ENCODE measurements at regions of chr1 and their contacts with region 1.

Region 1: GRCh38 chr1:153990468-153991150 is at the start of gene RPS27:
- DNase-seq: peak; percentile 82 to 98 (median 89)
- ATAC-seq: peak; percentile 84
- H3K4me3 ChIP-seq: peak within 1 kb of the TSS; percentile 81
- H3K27ac ChIP-seq: peak within 1 kb of the TSS; percentile 98
- H3K4me1 ChIP-seq: peaks cover 6 to 11% of the 10 kb centered on the region in 2 experiments; a peak in 3 of 5 replicates
- H3K27me3 ChIP-seq: no peaks in the 10 kb centered on the region
- CTCF ChIP-seq: peak in 1 of 3 experiments; percentile 26; a peak in 1 of 6 replicates
- EP300 ChIP-seq: peak; percentile 53; the same call in 1 of the 2 replicates
- POLR2A ChIP-seq: peak; percentile 100
- RAD21 ChIP-seq: peak; percentile 25 to 26; a peak in 1 of 4 replicates
- polyA plus RNA-seq, gene RPS27: 6,302 to 8,843 TPM

Region 2: DNA sequence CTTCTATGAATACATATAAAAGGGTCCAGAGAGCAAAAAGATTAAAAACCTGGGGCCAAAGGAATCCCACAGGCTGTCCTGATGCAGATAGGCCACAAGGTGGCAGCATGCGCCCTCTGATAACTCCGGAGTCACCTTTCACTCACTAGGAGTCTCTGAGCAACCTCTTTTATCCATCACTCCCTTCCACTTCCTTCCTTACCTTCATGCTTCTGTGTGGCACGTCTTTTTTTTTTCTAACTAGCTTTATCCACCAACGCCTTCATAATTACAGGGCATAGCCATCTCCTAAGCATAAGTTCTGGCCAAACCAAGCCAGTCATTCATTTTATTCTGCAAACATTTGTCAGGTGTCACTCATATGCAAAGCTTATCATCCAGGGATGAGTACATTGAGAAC is 638.1 kb before region 1 on chr1:
- CTCF ChIA-PET with region 1: interaction called, 3 read pairs
- POLR2A ChIA-PET with region 1: no interaction called
- in situ Hi-C with region 1: no loop called
- intact Hi-C with region 1: loop called (anchors 10 kb)
- DNase-seq: peak; percentile 79 to 82 (median 80)
- ATAC-seq: peak; percentile 85
- H3K4me3 ChIP-seq: no peak overlapping the region
- H3K27ac ChIP-seq: no peak overlapping the region
- H3K4me1 ChIP-seq: peaks cover 0 to 3% of the 10 kb centered on the region in 2 experiments; a peak in 1 of 5 replicates
- H3K27me3 ChIP-seq: peaks cover 7 to 31% of the 10 kb centered on the region in 2 experiments; a peak in 4 of 5 replicates
- CTCF ChIP-seq: peak; percentile 87 to 97 (median 91)
- EP300 ChIP-seq: no peak
- POLR2A ChIP-seq: no peak
- RAD21 ChIP-seq: peak; percentile 78 to 86

Region 3: DNA sequence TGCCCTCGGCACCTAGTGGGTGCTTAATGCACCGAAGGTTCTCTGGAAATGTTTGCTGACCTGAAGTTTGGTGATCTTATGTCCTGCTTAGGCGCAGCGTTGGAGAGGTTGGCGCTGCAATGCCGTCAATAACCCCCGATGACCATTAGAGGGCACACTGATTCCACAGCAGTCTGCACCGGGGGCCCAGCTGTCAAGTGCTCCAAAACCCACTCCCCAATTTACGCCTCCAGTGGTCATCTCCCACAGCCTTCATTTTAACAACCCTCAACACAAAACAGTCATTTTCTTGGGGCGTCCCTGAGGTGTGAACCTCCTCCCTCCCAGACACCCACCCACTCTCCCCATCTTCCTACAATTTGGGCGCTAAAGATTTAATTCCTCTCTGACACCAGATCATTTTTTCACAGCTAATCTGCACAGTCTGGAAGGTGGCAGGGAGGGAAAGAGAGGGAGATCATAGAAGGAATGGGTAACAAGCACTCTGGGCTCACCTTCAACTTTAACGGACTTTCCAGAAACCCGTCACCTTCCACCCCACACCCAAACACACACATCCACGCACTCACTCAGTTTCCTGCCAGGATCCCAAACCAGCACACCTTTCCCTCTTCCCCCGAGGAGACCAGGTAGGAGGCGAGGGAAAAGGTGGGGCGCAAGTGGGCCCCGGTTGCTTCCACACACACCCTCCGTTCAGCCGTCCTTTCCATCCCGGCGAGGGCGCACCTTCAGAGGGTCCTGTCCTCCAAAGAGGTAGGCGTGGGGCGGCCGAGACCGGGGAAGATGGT is 312.7 kb before region 1 on chr1:
- CTCF ChIA-PET with region 1: interaction called, 4 read pairs
- POLR2A ChIA-PET with region 1: interaction called, 10 read pairs
- in situ Hi-C with region 1: loop called (anchors 5 kb)
- intact Hi-C with region 1: loop called (anchors 5 kb)
- DNase-seq: peak; percentile 54 to 72 (median 62)
- ATAC-seq: peak; percentile 85
- H3K4me3 ChIP-seq: no peak overlapping the region
- H3K27ac ChIP-seq: no peak overlapping the region
- H3K4me1 ChIP-seq: peaks cover 0 to 19% of the 10 kb centered on the region in 2 experiments; a peak in 3 of 5 replicates
- H3K27me3 ChIP-seq: peaks cover 33 to 45% of the 10 kb centered on the region in 2 experiments; a peak in 4 of 5 replicates
- CTCF ChIP-seq: peak; percentile 91 to 95 (median 93)
- EP300 ChIP-seq: no peak
- POLR2A ChIP-seq: no peak
- RAD21 ChIP-seq: peak; percentile 86 to 94

Region 4: DNA sequence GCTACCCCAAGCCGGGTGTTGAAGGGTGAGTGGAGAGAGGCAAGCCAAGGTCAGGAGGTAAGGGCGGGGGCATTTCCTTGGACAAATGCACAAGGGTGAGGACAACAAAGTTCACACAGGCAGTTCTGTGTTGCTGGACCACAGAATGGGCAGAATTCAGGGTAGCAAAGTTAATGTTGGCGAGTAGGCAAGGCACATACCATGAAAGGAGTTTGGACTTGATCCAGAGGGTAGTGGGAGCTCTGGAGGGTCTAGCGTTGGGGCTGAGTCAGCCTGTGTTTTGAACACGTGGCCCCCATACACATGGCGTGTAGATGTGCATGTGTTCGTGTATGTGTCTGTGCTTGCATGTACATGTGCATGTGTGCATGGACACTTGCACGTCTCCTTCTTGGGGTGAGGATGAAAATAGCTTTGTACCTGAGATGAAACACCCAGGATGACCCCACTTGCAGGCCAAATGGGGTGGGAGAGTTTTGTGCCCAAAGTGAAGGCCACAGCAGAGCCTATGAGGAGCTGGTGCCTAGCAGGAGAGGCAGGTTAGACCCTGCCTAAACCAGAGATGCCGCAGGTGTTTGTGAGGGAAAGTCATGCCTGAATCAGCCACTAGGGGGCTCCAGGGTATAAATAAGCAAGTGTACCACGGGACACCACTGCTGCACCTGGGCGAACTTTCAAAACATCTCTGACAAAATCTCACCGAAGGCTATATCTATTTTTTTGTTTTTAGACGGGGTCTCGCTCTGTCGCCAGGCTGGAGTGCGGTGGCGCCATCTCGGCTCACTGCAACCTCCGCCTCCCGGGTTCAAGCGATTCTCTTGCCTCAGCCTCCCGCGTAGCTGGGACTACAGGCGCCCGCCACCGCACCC is 193.6 kb before region 1 on chr1:
- CTCF ChIA-PET with region 1: interaction called, 8 read pairs
- POLR2A ChIA-PET with region 1: interaction called, 13 read pairs
- in situ Hi-C with region 1: loop called (anchors 5 kb)
- intact Hi-C with region 1: loop called (anchors 1 kb)
- DNase-seq: peak; percentile 83 to 87 (median 86)
- ATAC-seq: peak; percentile 89
- H3K4me3 ChIP-seq: no peak overlapping the region
- H3K27ac ChIP-seq: no peak overlapping the region
- H3K4me1 ChIP-seq: peaks cover 0 to 42% of the 10 kb centered on the region in 2 experiments; a peak in 2 of 5 replicates
- H3K27me3 ChIP-seq: no peaks in the 10 kb centered on the region
- CTCF ChIP-seq: peak; percentile 88 to 91 (median 89)
- EP300 ChIP-seq: no peak
- POLR2A ChIP-seq: no peak
- RAD21 ChIP-seq: peak; percentile 66 to 86

Region 5: GRCh38 chr1:153946622-153947241 is 43.9 kb before region 1 on chr1 and contains the start of gene DENND4B:
- CTCF ChIA-PET with region 1: interaction called, 6 read pairs
- POLR2A ChIA-PET with region 1: interaction called, 11 read pairs
- in situ Hi-C with region 1: no loop called
- intact Hi-C with region 1: loop called (anchors 5 kb)
- DNase-seq: peak; percentile 92 to 96 (median 95)
- ATAC-seq: peak; percentile 94
- H3K4me3 ChIP-seq: peak within 1 kb of the TSS; percentile 99
- H3K27ac ChIP-seq: peak within 1 kb of the TSS; percentile 85
- H3K4me1 ChIP-seq: peaks cover 12 to 32% of the 10 kb centered on the region in 2 experiments; a peak in 4 of 5 replicates
- H3K27me3 ChIP-seq: no peaks in the 10 kb centered on the region
- CTCF ChIP-seq: peak; percentile 82 to 94 (median 89)
- EP300 ChIP-seq: 0 out of 2 replicates have a peak, but pooled peaks have one; percentile 13
- POLR2A ChIP-seq: peak; percentile 41; the same call in 1 of the 2 replicates
- RAD21 ChIP-seq: peak; percentile 44 to 57; a peak in 3 of 4 replicates
- polyA plus RNA-seq, gene DENND4B: 9.5 to 13.4 TPM

Region 6: GRCh38 chr1:153977250-153978240 is 13.1 kb before region 1 on chr1 and contains the start of gene JTB:
- CTCF ChIA-PET with region 1: no interaction called
- POLR2A ChIA-PET with region 1: interaction called, 104 read pairs
- in situ Hi-C with region 1: no loop called
- intact Hi-C with region 1: no loop called
- DNase-seq: peak; percentile 83 to 93 (median 84)
- ATAC-seq: peak; percentile 90
- H3K4me3 ChIP-seq: peak within 1 kb of the TSS; percentile 84
- H3K27ac ChIP-seq: peak within 1 kb of the TSS; percentile 91
- H3K4me1 ChIP-seq: peaks cover 13 to 17% of the 10 kb centered on the region in 2 experiments; a peak in 4 of 5 replicates
- H3K27me3 ChIP-seq: no peaks in the 10 kb centered on the region
- CTCF ChIP-seq: 0 out of 6 replicates have a peak, but pooled peaks of 1 of the 3 experiments have one; percentile 4
- EP300 ChIP-seq: peak; percentile 22; the same call in 1 of the 2 replicates
- POLR2A ChIP-seq: peak; percentile 83
- RAD21 ChIP-seq: 0 out of 4 replicates have a peak, but pooled peaks of 1 of the 2 experiments have one; percentile 2
- polyA plus RNA-seq, gene JTB: 24.7 to 36.7 TPM

Region 7: DNA sequence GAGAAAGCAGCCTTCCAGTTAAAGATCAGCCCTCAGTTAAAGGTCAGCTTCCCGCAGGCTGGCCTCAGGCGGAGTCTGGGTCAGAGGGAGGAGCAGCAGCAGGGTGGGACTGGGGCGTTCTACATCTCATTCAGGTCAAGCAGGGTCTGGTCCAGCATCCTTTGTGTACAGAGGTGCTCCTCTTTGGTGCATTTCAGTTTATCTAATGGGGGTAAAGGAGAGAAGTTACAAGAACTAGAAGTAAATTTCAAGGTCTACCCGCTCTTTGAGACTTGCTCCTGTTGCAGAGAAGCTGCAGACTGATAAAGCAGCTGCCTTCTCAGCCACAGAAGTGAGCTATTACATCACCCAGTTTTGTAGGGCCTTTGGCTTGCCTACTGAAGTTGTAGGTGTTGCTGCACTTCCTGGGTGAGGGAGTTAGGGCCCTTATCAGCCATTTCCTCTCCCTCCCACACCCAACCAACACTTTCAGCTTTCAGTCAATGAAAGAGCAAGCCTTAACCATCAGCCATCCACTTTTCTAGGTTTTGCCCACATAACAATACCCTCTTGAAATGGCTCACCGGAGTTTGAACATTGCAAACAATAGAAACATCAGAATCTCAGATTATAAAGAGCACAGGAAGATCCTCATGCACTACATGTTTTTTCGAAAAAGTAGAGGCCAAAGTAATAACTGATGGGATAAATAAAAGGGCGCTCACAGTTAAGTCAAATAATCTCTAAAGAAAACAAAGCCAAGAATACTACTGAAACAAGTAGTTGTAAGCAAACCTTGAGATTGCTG is 167.1 kb after region 1 on chr1:
- CTCF ChIA-PET with region 1: no interaction called
- POLR2A ChIA-PET with region 1: interaction called, 13 read pairs
- in situ Hi-C with region 1: no loop called
- intact Hi-C with region 1: no loop called
- DNase-seq: peak; percentile 61 to 95 (median 76)
- ATAC-seq: peak; percentile 95
- H3K4me3 ChIP-seq: no peak overlapping the region
- H3K27ac ChIP-seq: peak overlapping the region; percentile 91
- H3K4me1 ChIP-seq: peaks cover 20 to 44% of the 10 kb centered on the region in 2 experiments
- H3K27me3 ChIP-seq: no peaks in the 10 kb centered on the region
- CTCF ChIP-seq: no peak
- EP300 ChIP-seq: peak; percentile 93
- POLR2A ChIP-seq: peak; percentile 69
- RAD21 ChIP-seq: peak in 1 of 2 experiments; percentile 30; a peak in 2 of 4 replicates